Activated CD4-positive, alpha-beta memory T cell treated with anti-CD3 and anti-CD28 coated beads for 36 hours (primary cell): ENCODE measurements at regions of chr6 and their contacts with region 1.

Region 1: DNA sequence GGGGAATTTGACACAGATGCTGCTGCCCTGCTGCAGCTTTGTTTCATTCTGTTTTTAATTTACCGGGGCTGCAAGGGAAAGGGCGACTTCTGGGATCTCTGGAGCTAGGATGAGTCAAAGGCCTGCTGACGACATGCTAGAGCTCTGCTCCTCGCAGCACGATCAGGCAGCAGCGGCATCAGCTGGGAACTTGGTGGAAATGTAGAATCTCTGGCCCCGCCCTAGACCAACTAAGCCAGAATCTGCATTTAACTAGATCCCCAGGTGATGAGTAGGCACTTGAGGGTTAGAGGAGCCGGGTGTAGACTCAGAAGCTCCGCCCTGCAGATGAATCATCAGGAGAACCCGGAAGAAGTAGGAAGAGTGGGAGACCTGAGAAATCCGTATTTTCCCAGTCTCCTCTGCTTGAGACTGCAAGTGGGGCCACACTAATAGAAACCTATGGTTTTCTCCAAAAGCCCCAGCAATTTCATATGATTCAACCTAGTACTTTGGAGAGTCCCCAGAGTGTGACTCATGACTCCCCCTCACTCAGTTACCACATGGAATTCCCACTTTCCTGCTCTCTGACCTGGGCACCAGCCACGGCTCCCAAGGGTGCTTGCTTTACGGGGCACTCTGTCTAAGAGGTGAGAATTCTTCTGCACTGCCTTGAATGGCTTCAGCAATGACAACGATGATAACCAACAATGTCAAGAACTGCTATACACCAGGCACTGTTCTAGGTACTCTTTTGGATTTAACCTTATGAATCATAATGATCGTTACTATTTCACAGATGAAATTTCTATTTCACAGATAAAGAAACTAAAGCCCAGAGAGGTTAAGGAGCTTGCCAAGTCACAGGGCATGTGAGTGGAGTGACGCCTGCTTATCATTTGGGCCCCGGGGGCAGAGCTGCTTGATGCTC is 18.1 kb downstream of the TUBB2B start:
- DNase-seq: peak; percentile 84
- H3K4me3 Mint-ChIP-seq: peak overlapping the region; percentile 51
- H3K27ac Mint-ChIP-seq: peak overlapping the region; percentile 89
- H3K4me1 Mint-ChIP-seq: peaks cover 30% of the 10 kb centered on the region
- H3K27me3 Mint-ChIP-seq: peaks cover 20% of the 10 kb centered on the region

Region 2: GRCh38 chr6:3068329-3069214 is 140.8 kb before region 1 on chr6 and contains the start of gene RIPK1:
- CTCF ChIA-PET with region 1: no interaction called
- POLR2A ChIA-PET with region 1: no interaction called
- intact Hi-C with region 1: loop called (anchors 2 kb)
- DNase-seq: peak; percentile 96
- H3K4me3 Mint-ChIP-seq: peak within 1 kb of the TSS; percentile 96
- H3K27ac Mint-ChIP-seq: peak within 1 kb of the TSS; percentile 98
- H3K4me1 Mint-ChIP-seq: peaks cover 62% of the 10 kb centered on the region
- H3K27me3 Mint-ChIP-seq: no peaks in the 10 kb centered on the region
- total RNA-seq, gene RIPK1: 18.5 to 18.6 TPM

Region 3: DNA sequence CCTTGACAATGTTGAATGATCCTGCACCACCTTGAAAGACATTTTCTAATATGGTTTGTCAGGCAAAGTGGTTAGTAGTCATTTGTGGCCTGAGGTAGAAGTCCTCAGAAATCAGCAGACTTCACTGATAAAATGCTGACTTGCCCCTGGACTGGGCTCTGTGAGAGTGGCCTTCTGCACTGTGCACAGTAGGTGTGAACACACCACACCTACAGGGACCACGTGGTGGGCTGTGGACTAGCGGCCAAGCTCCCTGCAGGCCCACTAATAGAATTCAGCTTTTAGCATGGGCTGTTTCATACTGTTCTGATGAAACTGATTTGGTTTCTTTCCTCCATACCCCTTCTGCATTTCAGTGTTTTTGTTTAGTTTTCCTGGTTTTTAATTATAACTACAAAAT is 83.6 kb before region 1 on chr6:
- CTCF ChIA-PET with region 1: interaction called, 10 read pairs
- POLR2A ChIA-PET with region 1: no interaction called
- intact Hi-C with region 1: loop called (anchors 1 kb)
- DNase-seq: no peak
- H3K4me3 Mint-ChIP-seq: no peak overlapping the region
- H3K27ac Mint-ChIP-seq: no peak overlapping the region
- H3K4me1 Mint-ChIP-seq: peaks cover 7% of the 10 kb centered on the region
- H3K27me3 Mint-ChIP-seq: no peaks in the 10 kb centered on the region

Region 4: GRCh38 chr6:3157131-3157927 is 52.0 kb before region 1 on chr6 and contains the start of gene TUBB2A:
- CTCF ChIA-PET with region 1: interaction called, 5 read pairs
- POLR2A ChIA-PET with region 1: interaction called, 10 read pairs
- intact Hi-C with region 1: loop called (anchors 1 kb)
- DNase-seq: peak; percentile 84
- H3K4me3 Mint-ChIP-seq: peak within 1 kb of the TSS; percentile 80
- H3K27ac Mint-ChIP-seq: peak within 1 kb of the TSS; percentile 50
- H3K4me1 Mint-ChIP-seq: peaks cover 23% of the 10 kb centered on the region
- H3K27me3 Mint-ChIP-seq: peaks cover 7% of the 10 kb centered on the region
- total RNA-seq, gene TUBB2A: 4.2 to 4.6 TPM

Region 5: GRCh38 chr6:3162565-3163247 is 46.7 kb before region 1 on chr6:
- CTCF ChIA-PET with region 1: interaction called, 5 read pairs
- POLR2A ChIA-PET with region 1: interaction called, 10 read pairs
- intact Hi-C with region 1: loop called (anchors 1 kb)
- DNase-seq: peak; percentile 70
- H3K4me3 Mint-ChIP-seq: peak overlapping the region; percentile 77
- H3K27ac Mint-ChIP-seq: no peak overlapping the region
- H3K4me1 Mint-ChIP-seq: peaks cover 30% of the 10 kb centered on the region
- H3K27me3 Mint-ChIP-seq: peaks cover 8% of the 10 kb centered on the region

Region 6: GRCh38 chr6:3277851-3278416 is 68.6 kb after region 1 on chr6:
- CTCF ChIA-PET with region 1: no interaction called
- POLR2A ChIA-PET with region 1: no interaction called
- intact Hi-C with region 1: no loop called
- DNase-seq: no peak
- H3K4me3 Mint-ChIP-seq: no peak overlapping the region
- H3K27ac Mint-ChIP-seq: no peak overlapping the region
- H3K4me1 Mint-ChIP-seq: peaks cover 15% of the 10 kb centered on the region
- H3K27me3 Mint-ChIP-seq: no peaks in the 10 kb centered on the region